ENCODE measurements at regions of chrX and their contacts with region 1.

Region 1: DNA sequence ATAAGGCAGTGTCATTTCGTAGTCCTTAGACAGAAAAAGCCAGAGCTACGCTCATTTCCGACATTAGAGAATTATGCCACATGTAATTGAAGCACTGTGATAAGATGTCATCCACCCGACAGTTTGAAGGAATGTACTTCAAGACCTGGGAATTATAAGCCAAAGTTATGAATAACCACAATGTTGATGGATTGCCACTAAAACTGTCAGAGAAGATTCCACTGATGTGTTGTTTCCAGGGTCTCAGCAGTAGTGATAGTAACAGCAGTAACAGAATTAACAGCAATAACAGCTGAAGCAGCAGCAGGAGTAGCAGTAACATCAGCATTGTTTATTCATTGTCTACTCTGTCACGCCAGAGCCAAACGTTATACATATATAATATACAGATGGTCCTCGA is 24.7 kb downstream of the RAB33A start:
- DNase-seq: no peak
- H3K4me3 ChIP-seq: no peak overlapping the region
- H3K27ac ChIP-seq: no peak overlapping the region
- H3K4me1 ChIP-seq: no peaks in the 10 kb centered on the region
- H3K27me3 ChIP-seq: no peaks in the 10 kb centered on the region
- CTCF ChIP-seq: no peak

Region 2: DNA sequence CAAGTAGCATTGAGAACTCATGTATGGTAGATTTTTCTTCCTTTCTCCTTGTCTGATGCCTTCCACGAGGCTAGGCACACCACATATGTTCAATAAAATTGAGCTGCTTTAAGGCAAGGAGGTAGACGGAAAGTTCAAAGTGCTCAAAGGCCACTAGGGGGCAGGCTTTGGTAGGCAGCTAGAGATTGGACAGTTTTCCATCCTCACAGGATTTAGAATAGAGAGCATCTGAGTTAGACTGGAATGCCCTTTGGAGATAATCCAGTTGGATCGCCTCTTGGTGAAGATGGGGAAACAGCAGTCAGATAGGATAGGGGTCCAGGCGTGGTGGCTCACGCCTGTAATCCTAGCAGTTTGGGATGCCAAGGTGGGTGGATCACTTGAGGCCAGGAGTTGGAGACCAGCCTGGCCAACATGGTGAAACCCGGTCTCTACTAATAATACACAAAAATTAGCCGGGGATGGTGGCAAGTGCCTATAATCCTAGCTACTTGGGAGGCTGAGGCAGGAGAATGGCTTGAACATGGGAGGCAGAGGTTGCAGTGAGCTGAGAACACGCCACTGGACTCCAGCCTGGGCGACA is 116.6 kb before region 1 on chrX:
- CTCF ChIA-PET with region 1: interaction called, 3 read pairs
- dilution Hi-C with region 1: no loop called
- in situ Hi-C with region 1: loop called in 1 of 2 experiments (anchors 5 kb)
- intact Hi-C with region 1: loop called (anchors 1 kb)
- DNase-seq: peak; percentile 36
- H3K4me3 ChIP-seq: no peak overlapping the region
- H3K27ac ChIP-seq: no peak overlapping the region
- H3K4me1 ChIP-seq: no peaks in the 10 kb centered on the region
- H3K27me3 ChIP-seq: no peaks in the 10 kb centered on the region
- CTCF ChIP-seq: peak; percentile 65 to 72

Region 3: DNA sequence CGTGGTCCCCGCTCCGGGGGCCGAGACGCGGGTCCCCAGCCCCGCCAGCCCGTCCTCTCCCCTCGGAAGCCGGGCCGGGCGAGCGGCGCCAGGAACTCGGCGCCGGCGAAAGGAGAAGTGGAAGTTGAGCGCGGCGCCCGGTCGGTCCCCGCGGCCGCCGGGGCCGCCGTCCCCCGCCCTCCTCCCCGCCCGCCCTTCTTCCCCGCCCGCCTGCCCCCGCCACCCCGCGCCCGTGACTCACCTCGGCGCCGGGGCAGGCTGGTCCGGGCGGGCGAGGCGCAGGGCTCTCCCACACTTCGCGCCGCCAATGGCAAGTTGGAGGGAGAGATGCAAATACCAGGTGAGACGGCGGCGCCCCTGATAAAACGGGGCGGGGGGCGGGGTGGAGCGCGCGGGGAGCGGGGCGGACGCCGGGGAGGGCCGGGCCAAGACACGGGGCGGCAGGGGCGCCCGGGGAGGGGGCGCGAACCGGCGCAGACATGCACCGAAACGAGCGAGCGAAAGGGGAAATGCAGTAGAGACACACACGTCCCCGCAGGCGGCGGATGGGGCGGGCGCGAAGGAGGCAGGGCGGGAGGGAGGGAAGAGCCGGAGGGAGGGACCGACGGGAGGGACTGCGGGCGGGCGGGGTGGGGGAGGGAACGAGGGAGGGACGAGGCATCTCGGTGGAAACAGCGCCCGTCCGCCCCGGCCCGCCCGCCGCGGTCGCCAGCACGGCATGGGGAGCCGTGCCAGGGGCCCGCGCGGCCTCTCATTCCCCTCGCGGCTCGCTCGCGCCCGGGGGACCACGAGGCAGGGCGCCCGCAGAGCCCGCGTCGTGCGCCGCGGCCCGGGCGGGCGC is 85.9 kb before region 1 on chrX and contains the start of gene ELF4:
- CTCF ChIA-PET with region 1: no interaction called
- dilution Hi-C with region 1: loop called (anchors 5 kb)
- in situ Hi-C with region 1: no loop called
- intact Hi-C with region 1: no loop called
- DNase-seq: peak; percentile 78
- H3K4me3 ChIP-seq: peak within 1 kb of the TSS; percentile 59 to 76 (median 62)
- H3K27ac ChIP-seq: peak within 1 kb of the TSS; percentile 65
- H3K4me1 ChIP-seq: peaks cover 13% of the 10 kb centered on the region
- H3K27me3 ChIP-seq: no peaks in the 10 kb centered on the region
- CTCF ChIP-seq: no peak
- total RNA-seq, gene ELF4: 12.3 to 26.3 TPM

Region 4: DNA sequence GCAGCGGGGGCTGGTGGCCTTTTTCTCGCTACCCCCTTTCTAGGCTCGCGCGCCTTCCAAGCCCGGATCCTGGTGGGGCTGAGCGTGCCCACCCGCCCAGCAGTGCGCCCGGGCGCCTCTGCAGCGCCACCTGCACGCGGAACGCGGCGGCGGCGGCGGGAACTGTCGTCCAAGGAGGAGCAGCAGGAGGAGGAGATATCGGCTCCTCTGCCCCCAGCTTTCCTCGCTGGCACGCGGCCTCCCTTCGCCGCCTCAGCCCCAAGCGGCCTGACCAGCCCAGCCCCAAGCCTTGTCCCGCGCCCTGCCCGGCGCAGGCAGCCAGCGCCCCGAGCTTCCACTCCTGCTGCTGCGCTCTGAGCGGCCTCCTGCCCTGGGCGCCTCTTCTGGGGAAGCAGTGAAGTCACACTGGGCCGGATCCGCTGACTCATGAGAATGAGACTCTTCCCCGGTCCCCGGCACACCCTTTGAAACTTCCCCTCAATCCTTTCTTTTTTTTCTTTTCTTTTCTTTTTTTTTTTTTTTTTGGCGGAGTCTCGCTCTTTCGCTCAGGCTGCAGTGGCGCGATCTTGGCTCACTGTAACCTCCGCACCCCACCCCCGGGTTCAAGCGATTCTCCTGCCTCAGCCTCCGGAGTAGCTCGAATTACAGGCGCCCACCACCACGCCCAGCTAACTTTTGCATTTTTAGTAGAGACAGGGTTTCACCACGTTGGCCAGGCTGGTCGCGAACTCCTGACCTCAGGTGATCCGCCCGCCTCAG is 75.5 kb before region 1 on chrX:
- CTCF ChIA-PET with region 1: no interaction called
- dilution Hi-C with region 1: no loop called
- in situ Hi-C with region 1: no loop called
- intact Hi-C with region 1: loop called (anchors 2 kb)
- DNase-seq: peak; percentile 82
- H3K4me3 ChIP-seq: peak overlapping the region in 2 of 3 experiments; percentile 35 to 44
- H3K27ac ChIP-seq: peak overlapping the region; percentile 46
- H3K4me1 ChIP-seq: peaks cover 26% of the 10 kb centered on the region
- H3K27me3 ChIP-seq: no peaks in the 10 kb centered on the region
- CTCF ChIP-seq: peak; percentile 33 to 67

Region 5: DNA sequence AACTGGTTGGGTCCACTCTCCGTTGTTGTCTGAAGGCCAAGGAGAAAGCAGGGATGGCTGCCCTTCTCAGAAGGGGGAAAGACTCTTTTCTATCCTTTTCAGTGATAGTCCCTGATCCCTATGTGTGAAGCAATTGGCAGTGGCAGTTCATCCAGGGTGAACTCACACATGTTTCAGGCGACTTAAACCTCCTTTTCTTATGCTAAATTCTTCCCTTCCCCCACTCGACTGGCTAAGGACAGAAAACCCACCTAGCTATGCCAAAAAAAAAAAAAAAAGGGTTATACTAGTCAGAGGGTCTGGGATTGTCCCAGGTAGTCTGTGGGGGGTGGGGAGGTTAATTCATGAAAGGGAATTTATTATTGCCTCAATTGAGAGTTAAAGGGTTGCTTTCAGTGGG is 84.4 kb after region 1 on chrX:
- CTCF ChIA-PET with region 1: no interaction called
- dilution Hi-C with region 1: no loop called
- in situ Hi-C with region 1: no loop called
- intact Hi-C with region 1: no loop called
- DNase-seq: no peak
- H3K4me3 ChIP-seq: no peak overlapping the region
- H3K27ac ChIP-seq: no peak overlapping the region
- H3K4me1 ChIP-seq: no peaks in the 10 kb centered on the region
- H3K27me3 ChIP-seq: no peaks in the 10 kb centered on the region
- CTCF ChIP-seq: no peak

Region 6: DNA sequence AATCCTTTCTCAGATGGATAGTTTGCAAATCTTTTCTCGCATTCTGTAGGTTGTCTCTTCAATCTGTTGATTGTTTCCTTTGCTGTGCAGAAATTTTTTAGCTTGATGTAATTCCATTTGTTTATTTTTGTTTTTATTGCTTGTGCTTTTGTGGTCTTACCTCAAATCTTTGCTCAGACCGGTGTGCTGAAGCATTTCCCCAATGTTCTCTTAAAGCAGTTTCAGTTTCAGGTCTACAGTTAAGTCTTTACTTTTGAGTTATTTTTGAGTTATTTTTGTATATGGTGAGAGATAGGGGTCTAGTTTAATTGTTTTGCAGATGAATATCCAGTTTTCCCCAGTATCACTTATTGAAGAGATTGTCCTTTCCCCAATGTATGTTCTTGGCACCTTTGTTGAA is 125.1 kb after region 1 on chrX:
- CTCF ChIA-PET with region 1: no interaction called
- dilution Hi-C with region 1: no loop called
- in situ Hi-C with region 1: no loop called
- intact Hi-C with region 1: no loop called
- DNase-seq: no peak
- H3K4me3 ChIP-seq: no peak overlapping the region
- H3K27ac ChIP-seq: no peak overlapping the region
- H3K4me1 ChIP-seq: no peaks in the 10 kb centered on the region
- H3K27me3 ChIP-seq: no peaks in the 10 kb centered on the region
- CTCF ChIP-seq: no peak